H1 (cell line): ENCODE measurements at regions of chr5 and their contacts with region 1.

Region 1: DNA sequence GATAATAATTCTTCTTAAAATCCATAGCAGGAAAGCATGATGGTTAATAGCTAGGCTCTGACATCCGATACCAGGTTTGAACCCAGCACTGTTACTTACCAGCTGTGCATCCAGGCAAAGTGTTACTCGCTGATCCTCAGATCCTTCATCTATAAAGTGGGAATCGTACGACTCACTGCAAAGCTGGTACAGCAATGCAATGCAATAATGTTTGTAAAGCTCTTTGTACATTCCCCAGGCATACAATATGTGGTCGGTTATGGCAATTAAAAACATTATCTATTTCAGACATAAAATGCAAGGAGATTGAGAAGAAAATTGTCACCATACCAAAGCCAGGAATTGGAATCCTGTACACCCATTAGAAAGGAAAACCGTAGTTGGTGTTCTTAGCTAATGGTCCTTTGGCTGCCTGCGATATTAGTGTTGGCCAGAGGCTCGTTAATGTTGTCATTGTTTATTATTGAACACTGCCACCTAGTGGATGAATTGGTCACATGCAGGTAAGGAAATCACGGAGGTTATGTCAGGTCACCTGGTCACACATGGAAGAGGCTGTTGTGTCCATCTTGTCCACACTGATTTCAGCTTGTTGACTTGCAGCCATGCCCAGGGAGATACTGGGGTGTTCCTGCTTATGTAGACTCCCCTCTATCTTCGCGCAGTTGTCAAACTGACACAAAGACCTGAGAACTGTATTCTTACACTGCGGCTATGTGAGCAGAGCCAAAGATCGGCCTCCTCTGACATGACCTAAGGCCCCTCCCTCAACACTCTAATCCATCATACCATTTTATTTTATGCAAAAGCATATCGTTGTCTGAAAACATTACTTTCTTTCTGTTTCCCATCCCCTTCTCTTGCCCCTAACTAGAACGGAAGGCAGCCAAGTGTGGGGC is 87.5 kb upstream of the PPP2R2B start:
- DNase-seq: peak; percentile 15 to 75
- H3K4me3 ChIP-seq: no peak overlapping the region
- H3K27ac ChIP-seq: no peak overlapping the region
- H3K4me1 ChIP-seq: no peaks in the 10 kb centered on the region; a peak in 1 of 7 replicates
- H3K27me3 ChIP-seq: no peaks in the 10 kb centered on the region
- CTCF ChIP-seq: peak; percentile 29 to 85 (median 83)
- EP300 ChIP-seq: no peak
- POLR2A ChIP-seq: no peak
- RAD21 ChIP-seq: peak; percentile 97 to 98

Region 2: DNA sequence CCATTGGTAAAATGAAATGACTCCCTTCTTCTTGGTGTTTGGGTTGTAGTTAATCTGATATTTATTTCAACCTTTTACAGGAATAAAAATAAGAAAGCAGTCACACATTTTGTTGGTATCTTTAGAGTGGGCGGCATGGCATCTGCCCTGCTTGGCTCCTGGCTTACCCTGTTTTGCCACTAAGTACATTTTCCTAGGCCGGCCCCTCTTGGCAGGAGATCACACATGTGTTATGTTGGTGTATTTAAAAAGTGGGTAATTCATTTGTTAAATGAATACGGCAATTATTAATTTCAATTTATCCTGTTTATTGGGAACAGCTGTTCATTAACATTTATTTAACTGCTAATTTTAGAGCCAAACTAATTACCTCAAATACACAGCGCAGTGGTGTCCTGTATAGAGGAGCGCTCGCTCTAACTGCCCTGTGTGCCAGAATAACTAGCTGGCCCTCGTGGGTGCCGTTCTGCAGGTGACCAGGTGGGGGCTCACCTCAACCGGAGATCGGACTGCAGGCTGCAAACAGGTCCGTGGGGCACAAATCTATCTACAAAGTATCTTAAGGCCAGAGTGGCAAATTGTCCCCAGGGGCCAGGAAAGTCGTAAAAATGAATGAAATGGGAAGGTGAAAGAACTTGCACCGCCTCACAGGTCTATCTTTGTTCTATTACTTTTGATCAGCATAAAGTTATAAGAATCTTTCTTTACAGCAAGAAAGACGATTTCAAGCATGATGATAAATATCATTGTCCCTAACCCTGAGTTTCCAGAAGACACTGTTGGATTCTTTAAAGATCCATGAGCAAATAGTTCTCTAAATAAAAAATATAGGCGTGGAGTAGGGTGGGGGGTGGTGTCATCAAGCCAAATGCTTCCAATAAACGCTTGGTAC is 423.8 kb before region 1 on chr5:
- CTCF ChIA-PET with region 1: interaction called, 123 read pairs
- POLR2A ChIA-PET with region 1: interaction called, 4 read pairs
- DNase-seq: peak; percentile 61 to 93
- H3K4me3 ChIP-seq: no peak overlapping the region
- H3K27ac ChIP-seq: no peak overlapping the region
- H3K4me1 ChIP-seq: peaks cover 0 to 3% (median 0%) of the 10 kb centered on the region in 4 experiments; a peak in 1 of 7 replicates
- H3K27me3 ChIP-seq: no peaks in the 10 kb centered on the region
- CTCF ChIP-seq: peak; percentile 89 to 100 (median 94)
- EP300 ChIP-seq: no peak
- POLR2A ChIP-seq: no peak
- RAD21 ChIP-seq: peak; percentile 99

Region 3: GRCh38 chr5:146565764-146566367 is 400.1 kb before region 1 on chr5:
- CTCF ChIA-PET with region 1: interaction called, 29 read pairs
- POLR2A ChIA-PET with region 1: no interaction called
- DNase-seq: peak in 1 of 2 experiments; percentile 74
- H3K4me3 ChIP-seq: no peak overlapping the region
- H3K27ac ChIP-seq: no peak overlapping the region
- H3K4me1 ChIP-seq: peaks cover 0 to 7% (median 3%) of the 10 kb centered on the region in 4 experiments; a peak in 3 of 7 replicates
- H3K27me3 ChIP-seq: no peaks in the 10 kb centered on the region
- CTCF ChIP-seq: peak; percentile 47 to 86 (median 75)
- EP300 ChIP-seq: no peak
- POLR2A ChIP-seq: no peak
- RAD21 ChIP-seq: peak; percentile 80 to 89

Region 4: DNA sequence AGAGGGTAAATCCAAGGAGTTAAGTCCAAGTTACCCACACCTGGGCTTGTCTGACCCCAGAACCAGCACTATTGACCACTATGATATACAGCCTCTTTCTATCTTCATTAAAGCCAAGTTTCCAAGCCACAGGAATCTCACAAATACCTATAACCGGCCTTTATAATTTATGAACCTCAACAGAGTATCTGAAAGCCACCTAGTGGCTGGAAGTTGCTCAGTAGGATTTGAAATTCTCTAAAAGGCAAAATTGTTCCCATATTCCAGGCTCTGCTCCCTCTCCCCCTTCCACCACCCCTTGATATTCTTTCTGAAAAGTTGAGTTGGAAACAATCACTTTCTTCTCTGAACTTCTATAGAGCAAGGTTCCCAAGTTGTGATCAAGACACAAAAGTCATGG is 343.6 kb before region 1 on chr5:
- CTCF ChIA-PET with region 1: interaction called, 10 read pairs
- POLR2A ChIA-PET with region 1: no interaction called
- DNase-seq: no peak
- H3K4me3 ChIP-seq: no peak overlapping the region
- H3K27ac ChIP-seq: no peak overlapping the region
- H3K4me1 ChIP-seq: peaks cover 3 to 13% (median 6%) of the 10 kb centered on the region in 4 experiments; a peak in 6 of 7 replicates
- H3K27me3 ChIP-seq: no peaks in the 10 kb centered on the region
- CTCF ChIP-seq: peak in 2 of 3 experiments; percentile 30 to 41; a peak in 2 of 4 replicates
- EP300 ChIP-seq: no peak
- POLR2A ChIP-seq: no peak
- RAD21 ChIP-seq: peak; percentile 17 to 26; a peak in 1 of 4 replicates

Region 5: DNA sequence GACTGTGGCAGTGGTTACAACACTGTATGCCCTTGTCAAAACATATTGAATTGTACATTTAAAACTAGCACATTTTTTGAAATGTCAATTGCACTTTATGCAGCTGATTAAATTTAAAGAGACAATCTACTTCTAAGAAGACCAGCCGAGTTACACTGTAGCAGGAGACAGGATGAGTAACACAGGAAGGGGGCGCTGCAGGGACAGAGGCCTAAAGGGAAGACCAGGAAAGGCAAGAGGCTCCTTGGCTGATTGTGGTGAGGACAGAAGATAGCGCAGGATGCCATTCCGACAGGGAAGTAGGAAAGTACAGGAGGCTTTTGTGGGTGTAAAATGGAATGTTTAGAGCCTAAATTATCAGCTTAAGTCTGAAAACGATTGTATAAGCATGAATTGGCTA is 59.2 kb before region 1 on chr5:
- CTCF ChIA-PET with region 1: interaction called, 15 read pairs
- POLR2A ChIA-PET with region 1: no interaction called
- DNase-seq: peak; percentile 23 to 88
- H3K4me3 ChIP-seq: no peak overlapping the region
- H3K27ac ChIP-seq: no peak overlapping the region
- H3K4me1 ChIP-seq: no peaks in the 10 kb centered on the region
- H3K27me3 ChIP-seq: no peaks in the 10 kb centered on the region
- CTCF ChIP-seq: peak; percentile 75 to 85 (median 81)
- EP300 ChIP-seq: no peak
- POLR2A ChIP-seq: no peak
- RAD21 ChIP-seq: peak; percentile 66 to 73

Region 6: DNA sequence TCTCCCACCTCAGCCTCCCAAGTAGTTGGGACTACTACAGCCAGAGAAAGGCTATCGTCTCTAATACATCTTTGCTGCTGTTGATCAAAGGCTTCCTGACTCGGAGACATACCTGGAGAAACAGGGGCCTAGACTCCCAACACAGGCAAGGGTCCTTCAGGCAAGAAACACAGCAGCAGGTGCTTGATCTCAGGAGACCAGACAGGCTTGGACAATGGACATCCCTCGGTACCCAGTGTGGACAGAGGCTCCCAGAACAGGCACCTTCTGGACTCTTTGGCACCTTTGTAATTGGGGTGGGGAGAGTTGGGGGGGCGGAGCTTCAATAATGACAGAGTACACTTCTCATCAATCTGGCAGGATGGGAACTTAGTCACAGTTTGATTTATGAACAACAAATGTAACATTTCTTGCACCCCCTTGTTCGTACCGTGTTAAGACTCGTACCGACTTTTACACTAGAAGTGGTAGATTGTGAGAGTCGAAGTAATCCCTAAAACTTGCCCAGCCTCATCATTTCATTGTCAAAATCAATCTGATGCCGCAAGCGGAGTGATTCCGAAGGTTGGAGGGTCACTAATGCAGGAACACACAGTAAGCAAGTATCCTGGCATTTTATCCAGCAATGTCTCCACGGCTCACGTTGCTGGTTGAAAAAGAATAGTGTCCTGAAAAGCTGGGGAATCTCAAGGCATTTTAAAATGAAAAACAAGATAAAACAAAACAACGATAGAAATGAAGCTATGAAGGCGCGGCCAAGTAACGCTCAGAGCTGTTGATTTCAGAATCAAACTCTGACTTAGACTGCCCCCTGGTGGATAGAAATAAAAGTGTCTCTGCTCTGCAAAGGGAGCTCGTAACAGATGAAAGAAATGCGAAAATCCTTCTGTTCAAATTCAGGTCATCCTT is 222.4 kb after region 1 on chr5:
- CTCF ChIA-PET with region 1: interaction called, 36 read pairs
- POLR2A ChIA-PET with region 1: no interaction called
- DNase-seq: peak in 1 of 2 experiments; percentile 50
- H3K4me3 ChIP-seq: no peak overlapping the region
- H3K27ac ChIP-seq: no peak overlapping the region
- H3K4me1 ChIP-seq: peaks cover 0 to 15% (median 5%) of the 10 kb centered on the region in 4 experiments; a peak in 3 of 7 replicates
- H3K27me3 ChIP-seq: no peaks in the 10 kb centered on the region
- CTCF ChIP-seq: peak in 2 of 3 experiments; percentile 66 to 80; a peak in 3 of 4 replicates
- EP300 ChIP-seq: no peak
- POLR2A ChIP-seq: no peak
- RAD21 ChIP-seq: peak; percentile 88 to 94